ENCODE measurements at regions of chr14 and their contacts with region 1.

Region 1: DNA sequence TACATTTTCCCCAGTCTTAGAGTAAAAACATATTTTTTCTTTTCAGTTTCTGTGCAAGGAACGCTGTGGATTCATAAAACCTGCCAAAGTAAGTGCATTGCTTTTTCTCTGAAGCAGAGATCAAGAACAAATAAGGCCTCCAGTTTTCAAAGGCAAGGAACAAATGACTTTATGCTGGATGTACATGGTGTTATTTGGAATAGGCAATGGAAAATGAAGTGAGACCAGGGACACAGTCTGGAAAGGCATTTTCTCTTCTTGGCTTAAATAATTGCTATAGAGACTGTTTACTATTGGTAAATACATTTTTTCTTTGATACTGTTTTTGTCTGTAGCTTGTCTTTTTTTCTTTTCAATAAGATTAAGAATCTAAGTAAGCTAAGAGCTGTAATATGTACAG is 725.9 kb upstream of the MDGA2 start:
- DNase-seq: no peak
- ATAC-seq: no peak

Region 2: GRCh38 chr14:47917345-47917954 is 483.9 kb before region 1 on chr14:
- intact Hi-C with region 1: loop called in 1 of 2 experiments (anchors 10 kb)
- DNase-seq: no peak
- ATAC-seq: no peak

Measured in left colon (tissue), 2 donors.